ENCODE measurements at regions of chr4 and their contacts with region 1.

Region 1: GRCh38 chr4:173301518-173302201 is 32.5 kb downstream of the HMGB2 start:
- DNase-seq: no peak
- H3K4me3 ChIP-seq: no peak overlapping the region
- CTCF ChIP-seq: peak; percentile 35

Region 2: DNA sequence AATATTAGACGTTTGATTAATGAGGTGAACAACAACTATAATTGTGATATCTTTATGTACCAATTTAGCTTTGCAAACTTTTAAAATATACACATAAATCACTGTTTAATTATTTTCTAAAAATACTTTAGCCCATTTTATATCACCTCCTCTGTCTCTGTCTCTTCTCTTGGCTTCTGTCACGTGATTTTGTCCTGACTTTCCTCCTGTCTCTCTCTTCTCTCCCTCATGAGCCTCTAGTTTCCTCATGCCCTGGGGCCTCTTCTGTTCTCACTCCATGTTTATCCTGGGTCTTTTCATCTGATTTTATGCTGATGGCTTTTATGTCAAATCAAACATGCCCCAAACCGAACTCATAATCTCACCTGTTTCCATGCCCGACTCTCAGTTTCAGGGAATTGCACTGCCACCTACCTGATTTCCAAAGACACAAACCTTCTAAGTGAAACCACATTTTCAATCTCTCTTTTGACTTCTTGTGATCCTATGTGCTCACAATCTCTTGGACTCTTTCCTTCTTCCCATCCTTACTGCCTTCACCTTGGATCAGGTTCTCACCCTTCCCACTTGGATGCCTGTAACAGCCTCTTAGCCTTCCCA is 436.0 kb before region 1 on chr4:
- CTCF ChIA-PET with region 1: no interaction called
- POLR2A ChIA-PET with region 1: no interaction called
- DNase-seq: no peak
- H3K4me3 ChIP-seq: no peak overlapping the region
- CTCF ChIP-seq: no peak

Region 3: GRCh38 chr4:173013232-173013930 is 288.3 kb before region 1 on chr4:
- CTCF ChIA-PET with region 1: interaction called, 87 read pairs
- POLR2A ChIA-PET with region 1: no interaction called
- DNase-seq: no peak
- H3K4me3 ChIP-seq: no peak overlapping the region
- CTCF ChIP-seq: peak; percentile 56

Region 4: DNA sequence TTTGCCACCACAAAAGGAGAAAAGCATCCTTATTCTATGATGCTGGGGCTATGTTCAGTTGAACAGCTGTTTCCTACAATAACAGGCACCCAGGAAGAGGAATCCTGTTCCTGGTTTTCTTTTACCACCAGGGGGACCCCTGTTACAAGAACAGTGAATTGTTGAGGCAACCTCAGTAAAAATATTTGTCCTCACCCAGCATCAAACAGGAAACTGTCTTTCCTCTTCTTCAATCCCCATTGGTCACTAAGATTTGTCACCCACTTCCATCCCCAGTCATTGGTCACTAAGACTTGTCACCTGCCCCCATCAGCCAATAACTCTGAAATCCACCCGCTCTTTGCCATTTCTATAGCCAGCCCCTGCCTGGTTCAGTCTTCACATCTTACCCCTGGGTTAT is 276.5 kb before region 1 on chr4:
- CTCF ChIA-PET with region 1: interaction called, 20 read pairs
- POLR2A ChIA-PET with region 1: no interaction called
- DNase-seq: no peak
- H3K4me3 ChIP-seq: no peak overlapping the region
- CTCF ChIP-seq: peak; percentile 54

Region 5: GRCh38 chr4:173264684-173265185 is 36.9 kb before region 1 on chr4:
- CTCF ChIA-PET with region 1: interaction called, 13 read pairs
- POLR2A ChIA-PET with region 1: no interaction called
- DNase-seq: no peak
- H3K4me3 ChIP-seq: no peak overlapping the region
- CTCF ChIP-seq: no peak

Region 6: DNA sequence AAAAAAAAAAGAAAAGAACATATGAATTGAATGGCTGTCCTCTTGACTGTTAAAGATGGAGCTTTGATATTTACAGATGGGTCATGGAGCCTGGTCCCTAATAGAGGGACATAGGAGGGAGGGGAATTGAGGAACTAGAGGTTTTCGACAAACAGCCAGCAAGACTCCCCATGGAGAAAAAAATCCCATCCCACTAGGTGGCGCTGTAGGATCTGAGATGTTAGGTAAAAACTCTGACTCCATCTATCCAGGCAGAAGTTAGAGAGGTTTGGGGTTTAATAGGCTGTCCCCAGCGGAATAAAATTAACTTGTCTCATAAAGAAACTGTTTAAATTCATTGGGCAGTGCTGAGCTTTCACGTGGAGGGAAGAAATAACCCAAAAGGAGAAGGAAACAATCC is 13.4 kb before region 1 on chr4:
- CTCF ChIA-PET with region 1: interaction called, 64 read pairs
- POLR2A ChIA-PET with region 1: no interaction called
- DNase-seq: peak; percentile 17
- H3K4me3 ChIP-seq: no peak overlapping the region
- CTCF ChIP-seq: peak; percentile 48

Region 7: GRCh38 chr4:173935622-173936405 is 634.2 kb after region 1 on chr4:
- CTCF ChIA-PET with region 1: no interaction called
- POLR2A ChIA-PET with region 1: no interaction called
- DNase-seq: no peak
- H3K4me3 ChIP-seq: no peak overlapping the region
- CTCF ChIP-seq: no peak